ENCODE measurements at regions of chr14 and their contacts with region 1.

Region 1: GRCh38 chr14:106417224-106418049 is 891.1 kb downstream of the TMEM121 start:
- H3K4me3 ChIP-seq: no peak overlapping the region
- H3K27ac ChIP-seq: no peak overlapping the region
- H3K4me1 ChIP-seq: no peaks in the 10 kb centered on the region
- CTCF ChIP-seq: peak; percentile 87

Region 2: GRCh38 chr14:106094654-106095189 is 322.7 kb before region 1 on chr14:
- CTCF ChIA-PET with region 1: no interaction called
- POLR2A ChIA-PET with region 1: no interaction called
- H3K4me3 ChIP-seq: no peak overlapping the region
- H3K27ac ChIP-seq: no peak overlapping the region
- H3K4me1 ChIP-seq: no peaks in the 10 kb centered on the region
- CTCF ChIP-seq: 0 out of 2 replicates have a peak, but pooled peaks have one; percentile 34

Region 3: GRCh38 chr14:106372870-106373652 is 44.4 kb before region 1 on chr14:
- CTCF ChIA-PET with region 1: interaction called, 72 read pairs
- POLR2A ChIA-PET with region 1: no interaction called
- H3K4me3 ChIP-seq: no peak overlapping the region
- H3K27ac ChIP-seq: no peak overlapping the region
- H3K4me1 ChIP-seq: no peaks in the 10 kb centered on the region
- CTCF ChIP-seq: peak; percentile 83

Region 4: DNA sequence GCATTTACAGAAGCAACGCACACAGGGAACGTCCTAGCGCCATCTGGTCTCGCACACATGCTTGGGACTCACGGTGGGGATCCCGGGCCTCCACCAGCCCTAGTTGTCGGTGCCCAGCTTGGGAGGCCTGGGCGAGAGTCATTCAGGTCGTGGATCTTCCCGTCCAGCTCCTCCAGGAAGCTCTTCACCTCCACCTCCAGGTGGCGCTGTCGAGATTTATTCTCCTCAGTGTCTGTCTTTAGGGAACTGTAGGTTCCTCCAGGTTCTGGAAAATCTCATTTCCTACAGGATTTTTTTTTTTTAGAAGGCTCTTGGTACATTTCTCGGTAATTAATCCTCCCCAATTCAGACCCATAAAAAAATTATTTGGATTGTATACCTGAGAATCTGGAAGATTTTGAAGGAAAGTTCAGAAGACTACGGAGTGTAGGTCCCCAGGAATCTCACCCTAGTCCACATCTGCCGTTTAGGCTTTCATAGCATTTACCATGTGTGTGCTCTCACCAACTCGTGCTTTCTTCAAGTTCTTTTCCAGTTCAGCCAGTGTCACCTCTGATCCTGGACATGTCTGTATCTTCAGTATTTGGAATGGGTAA is 19.0 kb after region 1 on chr14:
- CTCF ChIA-PET with region 1: interaction called, 29 read pairs
- POLR2A ChIA-PET with region 1: no interaction called
- H3K4me3 ChIP-seq: no peak overlapping the region
- H3K27ac ChIP-seq: no peak overlapping the region
- H3K4me1 ChIP-seq: no peaks in the 10 kb centered on the region
- CTCF ChIP-seq: no peak

Region 5: DNA sequence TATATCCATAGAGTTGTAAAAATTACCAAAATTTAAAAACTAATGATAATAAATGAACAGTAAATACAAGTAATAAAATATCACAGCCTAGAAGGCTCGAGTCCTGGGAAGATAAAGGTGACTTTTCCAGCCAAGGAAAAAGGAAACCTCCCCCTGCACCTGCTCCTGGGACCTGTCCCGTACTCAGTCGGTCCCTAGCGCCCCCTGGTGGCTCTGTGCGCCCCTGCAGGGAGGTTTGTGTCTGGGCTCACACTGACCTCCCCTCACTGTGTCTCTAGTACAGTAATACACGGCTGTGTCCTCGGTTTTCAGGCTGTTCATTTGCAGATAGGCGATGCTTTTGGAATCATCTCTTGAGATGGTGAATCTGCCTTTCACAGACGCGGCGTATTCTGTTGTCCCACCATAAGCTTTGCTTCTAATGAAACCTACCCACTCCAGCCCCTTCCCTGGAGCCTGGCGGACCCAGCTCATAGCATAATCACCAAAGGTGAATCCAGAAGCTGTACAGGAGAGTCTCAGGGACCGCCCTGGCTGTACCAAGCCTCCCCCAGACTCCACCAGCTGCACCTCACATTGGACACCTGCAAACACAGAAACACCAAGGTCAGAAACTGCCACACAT is 139.3 kb after region 1 on chr14:
- CTCF ChIA-PET with region 1: interaction called, 13 read pairs
- POLR2A ChIA-PET with region 1: no interaction called
- H3K4me3 ChIP-seq: no peak overlapping the region
- H3K27ac ChIP-seq: no peak overlapping the region
- H3K4me1 ChIP-seq: no peaks in the 10 kb centered on the region
- CTCF ChIP-seq: no peak

Measured in HEK293 (cell line).